ENCODE measurements at regions of chr1 and their contacts with region 1.

Region 1: DNA sequence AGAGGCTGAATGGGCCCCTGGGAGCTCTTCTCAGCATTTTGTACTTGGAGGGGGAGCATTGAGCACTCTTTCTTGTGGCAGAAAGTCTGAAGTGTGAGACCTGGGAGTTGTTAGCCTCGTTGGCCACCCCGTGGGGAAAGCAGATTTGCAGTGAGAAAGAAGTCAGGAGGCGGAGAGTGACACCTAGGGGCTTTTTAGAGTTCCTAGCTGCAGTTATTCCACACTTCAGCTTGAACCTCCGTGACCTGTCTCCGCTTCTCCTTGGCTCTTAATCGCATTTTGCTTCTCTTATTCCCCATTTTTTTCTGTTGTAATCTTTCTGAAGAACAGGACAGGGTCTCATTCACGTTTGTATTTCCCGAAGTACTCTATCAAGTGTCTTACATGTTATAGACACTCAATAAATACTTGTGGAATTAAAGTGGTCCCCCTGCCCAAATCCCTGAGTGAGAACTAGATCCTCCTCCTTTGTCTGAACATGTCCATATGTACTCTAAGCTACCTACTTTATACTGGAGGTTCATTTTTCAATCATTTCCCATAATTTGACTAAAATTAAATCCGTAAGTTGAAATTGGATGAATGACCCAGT is 14.5 kb upstream of the C1orf141 start:
- DNase-seq: peak; percentile 70
- ATAC-seq: peak; percentile 99
- H3K4me3 ChIP-seq: peak overlapping the region in 2 of 3 experiments; percentile 1 to 34; a peak in 1 of 6 replicates
- H3K27ac ChIP-seq: no peak overlapping the region
- H3K4me1 ChIP-seq: peaks cover 10% of the 10 kb centered on the region
- H3K27me3 ChIP-seq: no peaks in the 10 kb centered on the region; a peak in 1 of 5 replicates
- CTCF ChIP-seq: peak; percentile 86
- EP300 ChIP-seq: no peak
- POLR2A ChIP-seq: no peak
- RAD21 ChIP-seq: peak; percentile 84

Region 2: DNA sequence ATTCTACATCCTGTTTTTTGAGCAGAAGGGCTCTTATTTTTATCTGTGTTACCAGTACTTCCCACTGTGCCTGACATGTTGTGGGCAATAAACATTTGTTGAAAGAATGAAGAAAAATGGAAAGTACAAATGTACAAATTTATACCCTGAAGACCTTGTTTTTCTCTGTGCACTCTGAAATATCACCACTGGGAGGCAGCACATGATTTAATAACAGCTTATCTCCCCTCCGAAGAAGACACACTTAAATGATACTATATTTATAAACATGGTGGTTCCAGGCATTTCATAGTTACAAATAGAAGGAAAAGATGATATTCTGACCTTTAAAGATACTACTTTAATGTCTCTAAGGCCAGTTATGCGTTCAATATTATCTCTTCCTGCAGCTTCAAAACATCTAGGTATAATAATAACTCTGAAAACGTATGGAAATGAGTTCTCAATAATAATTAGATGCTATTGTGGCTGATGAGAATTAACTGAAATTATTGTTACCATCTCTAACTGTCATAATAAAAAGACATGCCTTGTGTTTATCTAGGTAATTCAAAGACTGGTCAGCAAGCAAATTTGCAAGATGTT is 384.2 kb before region 1 on chr1:
- CTCF ChIA-PET with region 1: interaction called, 20 read pairs
- POLR2A ChIA-PET with region 1: no interaction called
- in situ Hi-C with region 1: loop called (anchors 10 kb)
- intact Hi-C with region 1: no loop called
- DNase-seq: peak; percentile 24
- ATAC-seq: peak; percentile 56; the same call in 2 of the 3 replicates
- H3K4me3 ChIP-seq: no peak overlapping the region
- H3K27ac ChIP-seq: no peak overlapping the region
- H3K4me1 ChIP-seq: no peaks in the 10 kb centered on the region
- H3K27me3 ChIP-seq: no peaks in the 10 kb centered on the region
- CTCF ChIP-seq: peak; percentile 67
- EP300 ChIP-seq: no peak
- POLR2A ChIP-seq: no peak
- RAD21 ChIP-seq: peak; percentile 30; the same call in 1 of the 2 replicates

Region 3: DNA sequence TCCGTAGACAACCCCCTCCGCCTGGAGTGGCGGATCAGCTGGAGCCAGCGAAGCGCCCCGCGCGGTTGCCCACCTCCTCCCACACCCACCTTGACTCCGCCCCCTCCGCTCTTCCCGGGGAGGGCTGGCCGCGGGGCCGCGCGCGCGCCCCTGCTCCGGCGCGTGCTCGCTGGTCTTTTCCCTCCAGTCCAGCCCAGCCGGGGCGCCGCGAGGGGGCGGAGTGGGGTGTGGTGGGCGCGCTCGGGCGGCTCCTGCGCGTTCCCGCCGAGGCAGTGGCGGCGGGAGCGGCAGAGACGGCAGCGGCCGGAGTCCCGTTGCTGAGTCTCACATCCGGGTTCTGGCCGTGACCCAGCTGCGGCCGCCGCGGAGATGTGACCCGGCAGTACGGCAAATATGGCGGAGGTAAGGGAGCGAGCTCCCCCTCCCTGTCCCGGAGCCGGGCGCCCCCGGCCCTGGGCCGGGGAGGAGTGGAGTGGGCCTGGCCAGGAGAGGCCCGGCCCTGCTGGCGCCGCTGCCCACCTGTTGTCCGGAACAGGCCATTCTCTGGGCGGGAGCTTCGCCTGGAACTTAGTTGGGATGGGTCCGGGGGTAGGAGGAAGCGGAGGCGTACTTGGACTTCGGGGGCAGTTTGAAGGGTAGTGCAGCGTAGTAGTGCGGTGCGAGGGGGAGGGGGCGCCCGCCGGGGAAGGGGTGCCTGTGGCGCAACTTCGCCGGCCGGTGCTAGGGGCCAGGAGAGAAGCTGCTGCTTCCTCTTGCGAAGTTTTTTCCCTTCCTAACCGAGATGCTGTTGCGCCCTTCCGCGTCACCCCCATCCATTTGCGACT is 219.1 kb before region 1 on chr1:
- CTCF ChIA-PET with region 1: no interaction called
- POLR2A ChIA-PET with region 1: no interaction called
- in situ Hi-C with region 1: no loop called
- intact Hi-C with region 1: loop called (anchors 10 kb)
- DNase-seq: peak; percentile 86
- ATAC-seq: peak; percentile 84
- H3K4me3 ChIP-seq: peak overlapping the region; percentile 93 to 98 (median 94)
- H3K27ac ChIP-seq: peak overlapping the region; percentile 94
- H3K4me1 ChIP-seq: peaks cover 56% of the 10 kb centered on the region
- H3K27me3 ChIP-seq: no peaks in the 10 kb centered on the region; a peak in 1 of 5 replicates
- CTCF ChIP-seq: peak; percentile 55; the same call in 1 of the 2 replicates
- EP300 ChIP-seq: peak in 1 of 2 experiments; percentile 24; a peak in 1 of 4 replicates
- POLR2A ChIP-seq: peak; percentile 51 to 57
- RAD21 ChIP-seq: peak; percentile 47

Region 4: GRCh38 chr1:66996018-66996682 is 153.1 kb before region 1 on chr1:
- CTCF ChIA-PET with region 1: interaction called, 42 read pairs
- POLR2A ChIA-PET with region 1: interaction called, 4 read pairs
- in situ Hi-C with region 1: loop called (anchors 5 kb)
- intact Hi-C with region 1: loop called (anchors 1 kb)
- DNase-seq: peak; percentile 46
- ATAC-seq: peak; percentile 80
- H3K4me3 ChIP-seq: no peak overlapping the region
- H3K27ac ChIP-seq: no peak overlapping the region
- H3K4me1 ChIP-seq: peaks cover 9% of the 10 kb centered on the region; the same call in 1 of the 2 replicates
- H3K27me3 ChIP-seq: no peaks in the 10 kb centered on the region
- CTCF ChIP-seq: peak; percentile 76
- EP300 ChIP-seq: no peak
- POLR2A ChIP-seq: no peak
- RAD21 ChIP-seq: peak; percentile 70

Region 5: DNA sequence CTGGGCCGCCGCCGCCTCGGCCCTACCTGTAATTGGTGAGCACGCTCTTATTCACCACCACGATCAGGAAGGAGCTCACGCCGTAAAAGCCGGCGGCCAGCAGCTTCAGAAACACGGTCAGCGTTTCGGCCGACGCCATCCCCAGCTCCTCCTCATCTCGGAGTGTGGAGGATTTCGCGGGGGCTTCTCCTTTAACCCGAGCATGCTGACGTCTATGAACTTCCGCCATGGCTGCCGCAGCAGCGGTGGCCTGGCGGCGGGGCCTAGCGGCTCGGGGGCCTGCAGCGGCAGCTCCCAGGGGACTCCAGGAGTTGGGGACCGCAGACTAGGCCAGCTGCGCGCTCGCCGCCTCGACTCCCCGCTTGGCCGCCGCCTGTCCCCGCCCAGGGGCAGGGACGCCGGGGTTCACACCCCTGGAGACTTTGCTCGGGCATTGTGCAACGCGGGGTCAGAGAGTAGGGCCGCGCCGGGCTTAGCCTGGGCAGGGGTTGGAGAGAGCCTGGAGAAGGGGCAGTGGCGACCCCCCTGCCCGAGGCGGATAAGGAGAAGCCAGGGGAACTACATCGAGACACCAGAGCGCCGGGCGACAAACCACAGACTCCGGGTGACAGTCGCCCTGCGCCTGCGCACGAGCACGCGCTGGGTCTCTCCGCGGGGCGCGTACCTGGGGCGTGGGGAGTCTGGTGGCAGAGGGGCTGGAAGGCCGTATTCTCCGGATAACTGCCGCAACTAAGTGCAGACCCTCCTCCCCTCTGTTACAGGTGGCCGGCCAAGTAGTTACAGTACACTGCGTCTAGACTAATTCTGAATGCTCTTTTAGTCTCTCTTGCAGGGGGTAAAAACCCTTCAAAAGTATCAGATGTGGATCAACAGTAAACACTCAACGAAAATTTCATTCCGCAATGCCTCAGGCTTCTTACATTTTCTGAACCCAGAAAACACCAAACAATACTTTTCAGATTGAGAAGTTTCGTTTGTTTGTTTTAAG is 95.2 kb before region 1 on chr1 and contains the start of gene SLC35D1:
- CTCF ChIA-PET with region 1: no interaction called
- POLR2A ChIA-PET with region 1: no interaction called
- in situ Hi-C with region 1: loop called (anchors 5 kb)
- intact Hi-C with region 1: loop called (anchors 1 kb)
- DNase-seq: peak; percentile 86
- ATAC-seq: peak; percentile 90
- H3K4me3 ChIP-seq: peak within 1 kb of the TSS; percentile 85 to 96 (median 88)
- H3K27ac ChIP-seq: peak within 1 kb of the TSS; percentile 98
- H3K4me1 ChIP-seq: peaks cover 42% of the 10 kb centered on the region
- H3K27me3 ChIP-seq: no peaks in the 10 kb centered on the region; a peak in 1 of 5 replicates
- CTCF ChIP-seq: peak; percentile 40
- EP300 ChIP-seq: peak in 1 of 2 experiments; percentile 61; a peak in 1 of 4 replicates
- POLR2A ChIP-seq: peak; percentile 66 to 76
- RAD21 ChIP-seq: peak; percentile 30; the same call in 1 of the 2 replicates
- total RNA-seq, gene SLC35D1: 30.6 and 41.5 TPM in 2 replicates

Region 6: DNA sequence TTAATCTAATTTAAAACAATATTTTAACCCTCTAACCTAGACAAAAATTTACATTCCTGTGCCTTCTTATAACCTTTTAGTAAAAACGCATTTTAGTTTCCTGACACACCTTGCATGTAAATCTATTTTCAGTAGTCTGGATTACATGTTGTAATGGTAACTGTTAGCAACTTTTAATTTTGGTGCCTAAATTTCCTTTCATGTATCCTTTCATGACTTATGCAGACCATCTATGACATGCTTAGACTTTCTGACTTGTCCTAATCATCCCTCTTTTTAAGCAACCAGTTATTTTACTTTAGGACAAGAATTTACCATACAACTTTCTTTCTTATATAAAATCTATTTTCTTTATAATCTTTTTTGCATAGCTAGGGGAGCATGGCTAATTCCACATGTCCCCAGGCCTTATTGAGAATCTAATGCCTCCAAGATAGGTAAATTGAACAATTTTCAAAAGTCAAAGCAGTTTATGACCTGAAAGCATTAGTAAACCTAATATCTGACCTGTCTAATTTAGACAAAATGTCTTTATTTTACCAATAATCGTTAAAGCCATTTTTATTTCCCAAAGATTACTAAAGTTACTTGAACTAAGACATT is 100.9 kb after region 1 on chr1:
- CTCF ChIA-PET with region 1: no interaction called
- POLR2A ChIA-PET with region 1: no interaction called
- in situ Hi-C with region 1: no loop called
- intact Hi-C with region 1: no loop called
- DNase-seq: no peak
- ATAC-seq: no peak
- H3K4me3 ChIP-seq: no peak overlapping the region
- H3K27ac ChIP-seq: no peak overlapping the region
- H3K4me1 ChIP-seq: no peaks in the 10 kb centered on the region
- H3K27me3 ChIP-seq: no peaks in the 10 kb centered on the region; a peak in 1 of 5 replicates
- CTCF ChIP-seq: no peak
- EP300 ChIP-seq: no peak
- POLR2A ChIP-seq: no peak
- RAD21 ChIP-seq: no peak

Measured in HepG2 (cell line).